Activated B cell treated with CpG ODN at 0.5 μM for 24 hours (primary cell): ENCODE measurements at regions of chr1 and their contacts with region 1.

Region 1: GRCh38 chr1:156767101-156767878 is at the start of gene PRCC:
- DNase-seq: peak; percentile 88
- ATAC-seq: peak; percentile 91
- H3K4me3 Mint-ChIP-seq: no peak within 1 kb of the TSS
- H3K27ac Mint-ChIP-seq: no peak within 1 kb of the TSS
- H3K4me1 Mint-ChIP-seq: peaks cover 38% of the 10 kb centered on the region
- H3K27me3 Mint-ChIP-seq: no peaks in the 10 kb centered on the region
- CTCF ChIP-seq: no peak
- total RNA-seq, gene PRCC: 80.4 and 81.4 TPM in 2 replicates

Region 2: GRCh38 chr1:156740679-156741612 is 26.3 kb before region 1 on chr1 and contains the start of gene MRPL24:
- CTCF ChIA-PET with region 1: interaction called, 10 read pairs
- POLR2A ChIA-PET with region 1: interaction called, 128 read pairs
- intact Hi-C with region 1: loop called (anchors 1 kb)
- DNase-seq: peak; percentile 87
- ATAC-seq: peak; percentile 89
- H3K4me3 Mint-ChIP-seq: peak within 1 kb of the TSS; percentile 98
- H3K27ac Mint-ChIP-seq: peak within 1 kb of the TSS; percentile 97
- H3K4me1 Mint-ChIP-seq: peaks cover 33% of the 10 kb centered on the region
- H3K27me3 Mint-ChIP-seq: no peaks in the 10 kb centered on the region
- CTCF ChIP-seq: no peak
- total RNA-seq, gene MRPL24: 65.8 and 83.7 TPM in 2 replicates

Region 3: GRCh38 chr1:156751758-156752757 is 15.2 kb before region 1 on chr1:
- CTCF ChIA-PET with region 1: interaction called, 3 read pairs
- POLR2A ChIA-PET with region 1: interaction called, 90 read pairs
- intact Hi-C with region 1: loop called (anchors 1 kb)
- DNase-seq: peak; percentile 89
- ATAC-seq: peak; percentile 85
- H3K4me3 Mint-ChIP-seq: peak overlapping the region; percentile 93
- H3K27ac Mint-ChIP-seq: peak overlapping the region; percentile 92
- H3K4me1 Mint-ChIP-seq: peaks cover 62% of the 10 kb centered on the region
- H3K27me3 Mint-ChIP-seq: no peaks in the 10 kb centered on the region
- CTCF ChIP-seq: no peak